Heart left ventricle (tissue), 16 donors: ENCODE measurements at regions of chr14 and their contacts with region 1.

Region 1: DNA sequence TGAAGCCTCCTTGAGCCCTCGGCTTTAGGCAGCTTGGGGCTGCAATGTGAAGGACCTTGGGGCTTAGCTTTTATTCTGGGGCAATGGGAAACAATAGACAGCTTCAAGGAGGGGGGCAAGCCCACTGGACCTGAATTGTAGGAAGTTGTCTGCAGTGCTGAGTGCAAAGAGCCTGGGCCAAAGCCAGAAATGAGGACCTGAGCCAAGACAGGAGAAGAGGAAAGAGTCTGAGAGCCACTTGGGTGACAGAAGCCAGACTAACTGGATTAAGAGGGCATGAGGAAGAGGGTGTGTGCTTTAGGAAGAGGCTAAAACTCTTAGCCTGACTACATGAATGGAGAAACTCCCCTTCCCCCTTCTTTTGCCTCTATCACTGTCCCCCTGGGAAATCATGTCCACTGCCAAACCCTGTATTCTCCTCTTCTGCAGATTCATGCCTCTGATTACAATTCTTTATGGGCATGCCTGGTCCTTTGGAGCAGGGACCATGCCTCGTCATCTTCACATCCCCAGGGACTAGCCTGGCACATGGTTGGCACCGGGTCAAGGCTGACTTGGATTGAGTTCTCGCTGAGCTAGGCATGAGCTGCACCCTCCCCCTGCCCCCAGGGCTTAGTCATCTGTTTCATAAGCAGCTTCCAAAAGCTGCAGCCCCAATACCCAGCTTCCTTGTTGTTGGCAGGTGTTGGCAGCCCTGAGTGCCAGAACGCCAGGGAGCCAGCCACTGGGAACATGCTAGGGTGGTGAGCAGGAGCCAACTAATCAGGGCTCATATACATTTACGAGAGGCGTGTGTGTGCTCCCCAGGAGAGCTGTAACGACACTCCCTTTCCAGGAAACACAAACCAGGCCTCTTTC is 27.8 kb upstream of the JDP2 start:
- DNase-seq: peak; percentile 84 to 96 (median 90)
- ATAC-seq: peak; percentile 95 to 96 (median 96)
- H3K4me3 ChIP-seq: no peak overlapping the region
- H3K27ac ChIP-seq: peak overlapping the region in 11 of 12 donors; percentile 40 to 83 (median 70)
- H3K4me1 ChIP-seq: peaks cover 0 to 33% (median 25%) of the 10 kb centered on the region in 12 donors
- H3K27me3 ChIP-seq: no peaks in the 10 kb centered on the region
- CTCF ChIP-seq: no peak
- POLR2A ChIP-seq: no peak

Region 2: GRCh38 chr14:75126679-75127473 is 273.2 kb before region 1 on chr14 and contains the start of gene NEK9:
- intact Hi-C with region 1: no loop called
- DNase-seq: peak; percentile 93 to 94 (median 93)
- ATAC-seq: peak; percentile 94 to 96 (median 96)
- H3K4me3 ChIP-seq: peak within 1 kb of the TSS; percentile 57 to 96 (median 80)
- H3K27ac ChIP-seq: peak within 1 kb of the TSS; percentile 87 to 99 (median 97)
- H3K4me1 ChIP-seq: peaks cover 3 to 47% (median 29%) of the 10 kb centered on the region in 12 donors
- H3K27me3 ChIP-seq: no peaks in the 10 kb centered on the region
- CTCF ChIP-seq: peak in 2 of 12 donors; percentile 11 to 14
- POLR2A ChIP-seq: peak in 1 of 2 donors; percentile 56
- total RNA-seq, gene NEK9: 69.0 to 114 (median 98.3) TPM

Region 3: DNA sequence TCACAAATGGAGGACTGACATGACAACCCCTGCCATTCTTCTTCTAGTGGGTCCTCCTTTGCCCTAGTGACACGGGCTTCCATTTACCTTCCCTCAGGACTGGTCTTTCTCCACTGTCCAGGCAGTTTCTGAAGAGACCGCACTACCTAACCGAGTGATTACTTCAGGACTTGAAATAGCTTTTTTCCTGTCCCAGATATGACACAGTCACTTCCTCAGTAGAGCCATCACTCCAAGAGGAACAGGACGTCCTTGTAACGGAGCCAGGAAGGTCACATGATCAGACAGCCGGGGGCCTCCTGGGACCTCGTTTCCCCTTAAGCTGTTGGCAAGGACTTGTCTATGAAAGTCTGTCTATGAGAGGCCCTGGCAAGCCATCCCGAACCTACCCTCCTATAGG is 59.1 kb before region 1 on chr14:
- intact Hi-C with region 1: loop called in 2 of 10 experiments (anchors 2 to 5 kb)
- DNase-seq: peak; percentile 90 to 97 (median 91)
- ATAC-seq: peak; percentile 96 to 97 (median 97)
- H3K4me3 ChIP-seq: peak overlapping the region in 1 of 12 donors; percentile 26
- H3K27ac ChIP-seq: peak overlapping the region; percentile 71 to 95 (median 88)
- H3K4me1 ChIP-seq: peaks cover 10 to 79% (median 32%) of the 10 kb centered on the region in 12 donors
- H3K27me3 ChIP-seq: no peaks in the 10 kb centered on the region
- CTCF ChIP-seq: no peak
- POLR2A ChIP-seq: peak in 1 of 2 donors; percentile 81

Region 4: GRCh38 chr14:75350505-75351060 is 49.5 kb before region 1 on chr14:
- intact Hi-C with region 1: loop called in 2 of 10 experiments (anchors 5 kb)
- DNase-seq: no peak
- ATAC-seq: no peak
- H3K4me3 ChIP-seq: no peak overlapping the region
- H3K27ac ChIP-seq: no peak overlapping the region
- H3K4me1 ChIP-seq: peaks cover 0 to 6% (median 0%) of the 10 kb centered on the region in 12 donors
- H3K27me3 ChIP-seq: no peaks in the 10 kb centered on the region
- CTCF ChIP-seq: no peak
- POLR2A ChIP-seq: no peak

Region 5: DNA sequence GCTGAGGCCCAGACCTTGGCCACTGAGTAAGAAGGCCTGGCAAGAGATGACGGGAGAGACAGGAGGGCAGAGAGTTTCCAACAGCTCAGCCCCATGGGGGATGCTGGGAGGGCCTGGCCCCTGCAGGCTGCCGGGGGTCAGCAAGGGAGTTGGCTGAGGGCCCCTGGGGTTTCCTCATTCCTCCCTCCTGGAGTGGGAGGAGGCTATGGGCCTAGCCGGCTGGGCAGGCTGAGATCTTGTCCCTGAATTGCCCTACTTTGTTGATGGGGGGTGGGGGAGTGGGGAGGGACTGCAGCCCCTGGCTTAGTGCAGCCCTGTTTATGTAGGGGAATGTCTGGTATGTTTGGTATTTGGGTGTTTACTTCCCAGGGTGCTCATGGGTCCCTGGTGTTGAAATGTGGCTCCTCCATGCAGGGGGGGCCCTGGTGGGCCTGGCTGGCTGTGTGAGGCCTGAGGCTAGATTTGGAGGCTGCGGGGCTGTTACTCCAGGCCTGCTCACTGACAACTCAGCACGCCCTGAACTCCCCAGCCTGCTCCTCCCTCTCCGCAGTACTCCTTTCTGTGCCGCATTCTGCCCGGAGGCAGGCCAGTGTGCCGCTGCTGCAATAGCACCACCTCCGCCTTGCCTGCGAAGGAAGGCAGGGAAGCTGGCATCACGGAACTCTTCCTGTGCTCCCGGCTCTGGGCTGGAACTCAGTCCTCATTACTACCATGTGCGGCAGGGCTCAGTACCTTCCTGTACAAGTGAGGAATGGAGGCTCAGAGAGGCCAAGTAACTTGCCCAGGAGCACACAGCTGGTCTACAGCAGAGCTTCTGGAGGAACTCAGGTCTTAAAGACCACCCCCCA is 53.1 kb after region 1 on chr14:
- intact Hi-C with region 1: loop called in 1 of 10 experiments (anchors 5 kb)
- DNase-seq: peak in 4 of 5 donors; percentile 54 to 76 (median 65)
- ATAC-seq: peak; percentile 39 to 66 (median 58)
- H3K4me3 ChIP-seq: no peak overlapping the region
- H3K27ac ChIP-seq: peak overlapping the region; percentile 46 to 87 (median 74)
- H3K4me1 ChIP-seq: peaks cover 3 to 94% (median 69%) of the 10 kb centered on the region in 12 donors
- H3K27me3 ChIP-seq: no peaks in the 10 kb centered on the region
- CTCF ChIP-seq: no peak
- POLR2A ChIP-seq: no peak

Region 6: DNA sequence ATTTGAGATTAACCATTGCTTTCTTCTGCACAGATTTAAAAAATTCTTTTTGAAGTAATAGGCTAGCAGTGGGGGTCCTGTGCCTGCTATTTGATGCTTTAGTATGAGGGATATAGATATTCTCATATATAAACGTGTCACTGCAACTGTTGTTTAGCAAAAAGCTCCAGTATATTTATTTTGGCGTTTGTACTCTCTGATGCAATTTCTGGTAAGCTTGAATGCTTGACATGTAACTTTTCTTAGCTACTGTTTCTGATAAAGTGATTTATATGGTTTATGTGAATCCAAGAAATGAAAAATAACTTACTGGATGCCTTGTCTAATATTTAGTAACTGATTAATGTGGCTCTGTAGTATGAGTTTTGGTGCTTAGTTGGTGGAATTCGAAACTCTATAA is 338.1 kb after region 1 on chr14:
- intact Hi-C with region 1: no loop called
- DNase-seq: no peak
- ATAC-seq: no peak
- H3K4me3 ChIP-seq: no peak overlapping the region
- H3K27ac ChIP-seq: peak overlapping the region in 4 of 12 donors; percentile 13 to 28 (median 22)
- H3K4me1 ChIP-seq: peaks cover 0 to 8% (median 0%) of the 10 kb centered on the region in 12 donors
- H3K27me3 ChIP-seq: no peaks in the 10 kb centered on the region
- CTCF ChIP-seq: no peak
- POLR2A ChIP-seq: no peak